ENCODE measurements at regions of chr6 and their contacts with region 1.

Region 1: DNA sequence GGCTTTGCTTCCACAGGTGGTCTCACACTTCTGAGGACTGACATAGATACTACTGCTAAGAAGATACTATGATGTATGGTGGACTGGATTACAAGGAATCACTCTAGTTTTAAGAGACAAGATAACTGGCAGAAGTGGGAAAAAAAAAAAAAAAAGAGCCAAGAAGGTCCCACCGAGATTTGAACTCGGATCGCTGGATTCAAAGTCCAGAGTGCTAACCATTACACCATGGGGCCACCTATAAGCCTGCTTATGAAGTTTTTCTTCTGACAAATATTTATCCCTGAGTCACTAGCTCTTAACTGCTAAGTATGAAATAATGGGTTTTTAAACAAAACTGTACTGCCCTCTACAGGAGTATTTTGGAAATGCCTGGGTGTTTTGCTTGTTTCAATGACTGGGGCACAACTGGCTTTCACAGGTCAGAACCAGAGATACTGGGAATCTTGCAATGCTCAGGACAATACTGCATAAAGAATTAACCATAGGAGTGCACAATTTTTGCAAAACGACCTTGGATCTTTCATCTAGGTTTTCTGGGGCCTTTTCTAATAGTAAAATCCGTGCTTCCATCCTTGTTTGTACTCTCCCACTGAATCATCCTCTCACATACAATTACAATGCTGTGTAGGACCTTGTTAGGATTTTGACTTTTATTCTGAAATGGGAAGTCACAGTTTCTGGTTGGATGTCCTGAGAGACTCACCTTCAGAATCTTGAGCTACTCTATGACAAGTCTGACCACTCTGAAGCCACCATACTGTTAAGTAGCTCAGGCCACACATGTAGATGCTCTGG is 116.3 kb downstream of the OR2B2 start:
- DNase-seq: peak in 1 of 2 experiments; percentile 75
- H3K4me3 ChIP-seq: peak overlapping the region in 1 of 4 experiments; percentile 37; a peak in 2 of 8 replicates
- H3K27ac ChIP-seq: no peak overlapping the region
- H3K4me1 ChIP-seq: peaks cover 0 to 5% (median 1%) of the 10 kb centered on the region in 4 experiments; a peak in 2 of 7 replicates
- H3K27me3 ChIP-seq: no peaks in the 10 kb centered on the region; a peak in 1 of 7 replicates
- CTCF ChIP-seq: peak in 2 of 3 experiments; percentile 44 to 71; a peak in 3 of 4 replicates
- EP300 ChIP-seq: no peak
- POLR2A ChIP-seq: no peak
- RAD21 ChIP-seq: peak; percentile 66 to 72

Region 2: GRCh38 chr6:27777614-27778355 is 18.1 kb before region 1 on chr6:
- CTCF ChIA-PET with region 1: interaction called, 26 read pairs
- POLR2A ChIA-PET with region 1: interaction called, 3 read pairs
- DNase-seq: peak in 1 of 2 experiments; percentile 87
- H3K4me3 ChIP-seq: peak overlapping the region; percentile 46 to 64 (median 58)
- H3K27ac ChIP-seq: no peak overlapping the region
- H3K4me1 ChIP-seq: peaks cover 0 to 3% (median 2%) of the 10 kb centered on the region in 4 experiments; a peak in 4 of 7 replicates
- H3K27me3 ChIP-seq: peaks cover 5 to 20% (median 18%) of the 10 kb centered on the region in 4 experiments
- CTCF ChIP-seq: no peak
- EP300 ChIP-seq: no peak
- POLR2A ChIP-seq: no peak
- RAD21 ChIP-seq: no peak

Measured in H1 (cell line).